BJ (cell line): ENCODE measurements at regions of chr6 and their contacts with region 1.

Region 1: DNA sequence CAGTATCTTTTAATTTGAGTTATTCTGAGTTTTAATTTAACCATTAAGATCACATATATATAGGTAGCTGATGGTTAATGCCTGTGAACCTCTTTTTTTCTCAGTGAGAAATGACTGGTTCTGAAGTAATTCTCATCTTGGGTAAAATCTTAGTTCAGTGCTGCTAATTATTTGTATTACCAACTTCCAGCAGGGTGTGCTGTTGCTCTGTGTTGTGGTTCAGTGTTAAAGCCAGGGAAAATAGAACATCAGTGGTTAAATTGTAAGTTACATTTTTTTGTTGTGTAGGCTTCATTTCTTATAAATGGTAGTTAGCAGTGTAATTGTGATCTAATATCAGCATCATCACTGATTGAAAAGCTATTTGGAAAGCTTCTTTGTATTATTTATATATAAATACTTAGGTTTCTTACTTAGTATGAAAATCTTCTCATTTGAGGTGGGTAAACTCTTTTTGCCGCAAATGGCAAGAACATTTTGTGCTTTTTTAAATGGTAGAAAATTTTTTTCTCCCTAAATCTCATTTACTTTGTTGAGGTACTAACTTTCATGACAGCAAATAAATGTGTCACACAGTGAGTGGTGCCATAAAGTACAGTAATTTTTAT is 43.7 kb downstream of the CDC5L start:
- DNase-seq: no peak
- H3K4me3 ChIP-seq: no peak overlapping the region
- H3K27me3 ChIP-seq: no peaks in the 10 kb centered on the region
- CTCF ChIP-seq: peak; percentile 73

Region 2: GRCh38 chr6:44312901-44313788 is 118.1 kb before region 1 on chr6 and contains the start of gene AARS2:
- CTCF ChIA-PET with region 1: no interaction called
- POLR2A ChIA-PET with region 1: no interaction called
- DNase-seq: peak; percentile 22
- H3K4me3 ChIP-seq: peak within 1 kb of the TSS; percentile 93
- H3K27me3 ChIP-seq: peaks cover 3% of the 10 kb centered on the region
- CTCF ChIP-seq: peak; percentile 100
- polyA plus RNA-seq, gene AARS2: 4.5 and 7.3 TPM in 2 replicates

Region 3: GRCh38 chr6:44387346-44388133 is 43.7 kb before region 1 on chr6 and contains the start of gene CDC5L:
- CTCF ChIA-PET with region 1: no interaction called
- POLR2A ChIA-PET with region 1: no interaction called
- DNase-seq: peak; percentile 99
- H3K4me3 ChIP-seq: peak within 1 kb of the TSS; percentile 79
- H3K27me3 ChIP-seq: no peaks in the 10 kb centered on the region; the same call in 1 of the 2 replicates
- CTCF ChIP-seq: no peak
- polyA plus RNA-seq, gene CDC5L: 7.6 and 13.4 TPM in 2 replicates

Region 4: GRCh38 chr6:44446628-44447306 is 15.5 kb after region 1 on chr6:
- CTCF ChIA-PET with region 1: interaction called, 18 read pairs
- POLR2A ChIA-PET with region 1: no interaction called
- DNase-seq: peak; percentile 73
- H3K4me3 ChIP-seq: no peak overlapping the region
- H3K27me3 ChIP-seq: no peaks in the 10 kb centered on the region
- CTCF ChIP-seq: no peak

Region 5: GRCh38 chr6:44456070-44456965 is 25.1 kb after region 1 on chr6:
- CTCF ChIA-PET with region 1: interaction called, 81 read pairs
- POLR2A ChIA-PET with region 1: no interaction called
- DNase-seq: no peak
- H3K4me3 ChIP-seq: no peak overlapping the region
- H3K27me3 ChIP-seq: no peaks in the 10 kb centered on the region
- CTCF ChIP-seq: peak; percentile 87

Region 6: DNA sequence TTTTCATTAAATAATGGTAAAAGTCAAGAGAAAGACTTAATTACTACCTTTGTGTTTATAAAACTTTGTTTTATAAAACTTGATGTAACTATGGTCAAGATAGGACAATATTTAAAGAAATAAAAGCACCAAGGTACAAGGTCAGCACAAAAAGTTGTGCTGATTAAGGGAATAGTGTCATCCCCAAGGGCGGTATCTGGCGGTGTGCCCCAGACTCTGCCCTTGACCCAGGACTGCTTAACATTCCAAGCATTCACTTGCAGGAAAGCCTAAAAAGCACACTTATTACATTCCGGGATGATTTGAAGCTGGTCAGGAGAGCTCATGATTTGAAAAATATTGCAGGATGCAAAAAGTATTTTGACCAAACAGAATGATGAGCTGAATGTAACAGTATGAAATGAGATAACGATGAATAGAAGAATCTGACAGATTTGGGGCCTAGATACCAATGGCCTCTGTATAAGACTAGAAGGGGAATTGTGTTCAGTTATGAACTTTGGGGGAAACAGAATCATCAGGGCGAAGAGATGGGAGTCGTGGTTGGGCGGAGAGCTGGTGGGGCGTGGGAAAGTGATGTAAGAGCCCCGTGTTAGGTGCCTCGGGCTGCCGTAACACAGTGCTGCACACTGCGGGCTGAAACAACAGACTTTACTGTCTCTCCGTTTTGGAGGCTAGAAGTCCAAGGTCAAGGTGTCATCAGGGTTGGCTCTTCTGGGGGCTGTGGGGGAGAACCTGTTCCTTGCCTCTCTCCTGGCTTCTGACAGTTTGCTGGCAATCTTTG is 33.5 kb after region 1 on chr6:
- CTCF ChIA-PET with region 1: interaction called, 18 read pairs
- POLR2A ChIA-PET with region 1: no interaction called
- DNase-seq: no peak
- H3K4me3 ChIP-seq: no peak overlapping the region
- H3K27me3 ChIP-seq: no peaks in the 10 kb centered on the region
- CTCF ChIP-seq: no peak

Region 7: DNA sequence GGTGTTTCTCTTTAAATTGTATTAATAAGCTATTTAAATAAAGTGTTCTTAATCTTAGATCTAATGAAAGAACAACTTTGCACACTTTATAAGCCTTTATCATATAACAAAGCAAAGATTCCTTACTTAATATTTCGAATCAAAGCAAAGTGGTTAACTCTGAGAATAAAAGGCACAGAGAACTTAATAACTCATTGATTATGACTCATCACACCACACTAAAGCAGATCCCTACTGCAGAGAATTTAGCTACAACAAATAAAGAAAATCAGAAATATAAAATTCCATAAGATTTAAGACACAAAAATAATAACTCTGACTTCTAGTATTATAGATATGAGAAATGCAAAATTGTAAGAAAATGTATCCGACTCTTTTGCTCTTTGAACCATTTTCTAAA is 761.3 kb after region 1 on chr6:
- CTCF ChIA-PET with region 1: no interaction called
- POLR2A ChIA-PET with region 1: interaction called, 12 read pairs
- DNase-seq: no peak
- H3K4me3 ChIP-seq: no peak overlapping the region
- H3K27me3 ChIP-seq: no peaks in the 10 kb centered on the region
- CTCF ChIP-seq: no peak